HEK293 (cell line): ENCODE measurements at regions of chr12 and their contacts with region 1.

Region 1: DNA sequence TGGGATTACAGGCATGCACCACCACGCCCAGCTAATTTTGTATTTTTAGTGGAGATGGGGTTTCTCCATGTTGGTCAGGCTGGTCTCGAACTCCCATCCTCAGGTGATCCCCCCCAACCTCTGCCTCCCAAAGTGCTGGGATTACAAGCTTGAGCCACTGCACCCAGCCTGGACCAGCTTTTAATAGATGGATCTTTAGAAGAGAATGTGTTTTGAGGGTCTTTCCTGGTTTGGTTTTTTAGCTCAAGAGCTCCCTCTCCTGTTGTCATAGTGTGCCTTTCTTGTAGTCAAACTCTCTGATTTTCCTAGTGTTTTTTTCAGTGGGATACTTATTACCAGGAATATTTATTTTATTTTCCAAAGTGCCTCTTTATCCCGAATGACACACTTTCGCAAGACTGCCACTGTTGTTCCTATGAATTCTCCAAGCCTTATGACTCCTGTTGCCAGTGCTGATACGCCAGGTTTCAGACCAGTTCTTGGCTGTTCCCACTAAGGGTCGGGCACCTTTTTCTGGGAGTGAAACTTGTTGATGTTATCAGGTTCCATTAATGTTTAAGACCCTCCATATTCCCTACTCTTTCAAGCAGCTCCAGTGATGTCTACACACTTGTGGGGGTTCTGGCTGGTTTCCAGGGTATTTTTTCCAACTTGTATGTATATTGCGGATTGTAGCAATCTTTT is 31.5 kb upstream of the LIMA1 start:
- H3K4me3 ChIP-seq: no peak overlapping the region
- H3K27ac ChIP-seq: no peak overlapping the region
- H3K4me1 ChIP-seq: no peaks in the 10 kb centered on the region
- CTCF ChIP-seq: peak; percentile 48; the same call in 1 of the 2 replicates

Region 2: DNA sequence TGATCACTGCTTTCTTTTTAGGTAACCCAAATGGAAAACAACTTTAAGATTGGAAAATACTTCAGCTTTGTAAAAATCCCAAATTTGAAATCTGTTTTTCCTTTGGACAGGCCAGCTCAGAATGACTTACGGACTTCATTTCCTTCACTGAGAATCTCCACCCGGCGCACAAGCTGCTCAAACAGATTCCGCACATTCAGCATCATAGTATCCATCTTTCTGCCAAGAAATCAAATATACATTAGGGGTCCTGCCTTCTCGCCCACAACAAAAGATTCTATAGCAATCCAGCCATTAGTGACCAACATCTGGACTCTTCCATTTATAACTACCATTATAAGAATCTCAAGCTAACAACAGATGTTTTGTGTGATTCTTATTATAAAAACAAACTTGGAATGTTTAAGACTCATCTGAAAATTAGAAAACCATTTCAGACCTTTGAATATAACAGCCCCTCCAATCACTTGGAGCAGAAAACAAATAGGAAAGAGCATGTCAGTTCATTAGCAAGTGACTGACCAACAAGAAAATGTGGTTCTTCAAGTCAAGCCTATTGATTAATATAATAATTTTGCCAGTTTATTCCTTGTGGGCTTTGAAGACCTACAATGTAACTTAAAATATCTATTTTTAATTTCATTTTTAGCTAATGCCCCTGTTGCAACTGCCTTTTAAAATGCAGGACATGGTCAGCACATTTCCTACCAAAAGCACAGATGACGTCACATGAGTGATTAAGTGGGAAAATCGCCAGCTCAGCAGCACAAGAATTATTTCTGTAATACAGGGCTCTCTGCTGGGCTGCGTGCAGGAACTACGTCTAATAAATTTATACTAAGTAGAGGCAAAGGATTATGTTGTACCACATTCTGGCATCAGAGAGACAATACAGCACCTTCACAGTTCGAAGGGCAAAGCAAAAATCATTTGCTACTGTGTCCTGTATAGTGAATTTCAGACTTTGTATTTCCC is 298.0 kb before region 1 on chr12:
- CTCF ChIA-PET with region 1: no interaction called
- POLR2A ChIA-PET with region 1: no interaction called
- H3K4me3 ChIP-seq: no peak overlapping the region
- H3K27ac ChIP-seq: peak overlapping the region; percentile 13; the same call in 1 of the 2 replicates
- H3K4me1 ChIP-seq: peaks cover 12% of the 10 kb centered on the region
- CTCF ChIP-seq: no peak

Region 3: GRCh38 chr12:50111693-50112455 is 202.9 kb before region 1 on chr12 and contains the start of gene COX14:
- CTCF ChIA-PET with region 1: interaction called, 22 read pairs
- POLR2A ChIA-PET with region 1: interaction called, 3 read pairs
- H3K4me3 ChIP-seq: peak within 1 kb of the TSS; percentile 75
- H3K27ac ChIP-seq: peak within 1 kb of the TSS; percentile 65
- H3K4me1 ChIP-seq: peaks cover 6% of the 10 kb centered on the region; the same call in 1 of the 2 replicates
- CTCF ChIP-seq: peak; percentile 96; the same call in 1 of the 2 replicates

Region 4: DNA sequence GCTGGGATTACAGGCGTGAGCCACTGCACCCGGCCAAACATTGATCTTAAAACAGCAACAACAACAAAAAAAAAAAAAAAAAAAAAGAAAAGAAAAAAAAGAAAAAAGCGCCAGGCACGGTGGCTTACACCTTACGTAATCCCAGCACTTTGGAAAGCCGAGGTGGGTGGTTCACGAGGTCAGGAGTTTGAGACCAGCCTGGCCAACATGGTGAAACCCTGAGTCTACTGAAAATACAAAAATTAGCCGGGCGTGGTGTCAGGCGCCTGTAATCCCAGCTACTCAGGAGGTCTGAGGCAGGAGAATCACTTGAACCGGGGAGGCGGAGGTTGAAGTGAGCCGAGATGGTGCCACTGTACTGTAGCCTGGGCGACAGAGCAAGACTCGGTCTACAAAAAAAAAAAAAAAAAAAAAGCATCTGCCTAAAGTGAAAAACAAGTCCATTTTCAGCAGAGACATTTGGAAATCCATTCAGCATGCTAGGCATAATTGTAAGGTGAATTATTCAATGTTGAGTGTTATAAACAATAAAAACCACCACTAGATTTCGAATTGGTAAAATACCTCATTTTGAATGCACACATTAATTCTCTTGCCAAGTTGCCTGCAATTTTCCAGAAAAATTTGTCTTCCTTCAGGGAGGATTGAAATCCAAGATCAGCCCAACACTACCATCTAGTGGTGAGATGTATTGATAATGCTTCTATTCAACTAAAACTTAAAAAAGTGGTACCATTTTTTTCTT is 139.6 kb before region 1 on chr12:
- CTCF ChIA-PET with region 1: interaction called, 41 read pairs
- POLR2A ChIA-PET with region 1: no interaction called
- H3K4me3 ChIP-seq: no peak overlapping the region
- H3K27ac ChIP-seq: no peak overlapping the region
- H3K4me1 ChIP-seq: no peaks in the 10 kb centered on the region
- CTCF ChIP-seq: peak; percentile 31; the same call in 1 of the 2 replicates

Region 5: DNA sequence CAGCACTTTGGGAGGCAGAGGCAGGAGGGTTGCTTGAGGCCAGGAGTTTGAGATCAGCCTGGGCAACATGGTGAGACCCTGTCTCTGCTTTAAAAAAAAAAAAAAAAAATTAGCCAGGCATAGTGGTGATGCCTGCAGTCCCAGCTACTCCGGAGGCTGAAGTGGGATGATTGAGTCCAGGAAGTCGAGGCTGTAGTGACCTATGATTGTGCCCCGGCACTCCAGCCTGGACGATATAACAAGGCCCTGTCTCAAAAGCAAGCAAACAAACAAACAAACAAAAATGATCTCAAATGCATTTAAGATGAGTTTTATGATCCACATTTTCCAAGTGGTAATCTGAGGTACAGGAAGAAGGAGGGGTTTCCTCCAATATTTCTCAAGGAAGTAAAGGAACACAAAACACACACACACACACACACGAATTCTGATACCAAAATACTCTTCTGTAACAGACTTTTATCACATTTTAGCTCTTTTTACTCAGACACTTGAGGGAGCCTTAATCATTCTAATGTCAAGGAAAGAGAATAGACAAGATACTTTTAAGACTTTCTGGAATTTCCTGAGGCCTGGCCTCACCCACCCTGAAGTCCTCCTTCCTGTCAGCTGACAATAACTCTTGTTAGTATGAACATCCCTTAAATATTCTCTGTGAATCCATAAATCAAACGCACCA is 103.2 kb before region 1 on chr12:
- CTCF ChIA-PET with region 1: interaction called, 12 read pairs
- POLR2A ChIA-PET with region 1: interaction called, 3 read pairs
- H3K4me3 ChIP-seq: no peak overlapping the region
- H3K27ac ChIP-seq: no peak overlapping the region; the same call in 1 of the 2 replicates
- H3K4me1 ChIP-seq: 0 out of 2 replicates have a peak, but pooled peaks cover 2% of the 10 kb centered on the region
- CTCF ChIP-seq: no peak

Region 6: GRCh38 chr12:50302686-50303085 is 12.1 kb before region 1 on chr12:
- CTCF ChIA-PET with region 1: interaction called, 12 read pairs
- POLR2A ChIA-PET with region 1: interaction called, 3 read pairs
- H3K4me3 ChIP-seq: no peak overlapping the region
- H3K27ac ChIP-seq: no peak overlapping the region
- H3K4me1 ChIP-seq: no peaks in the 10 kb centered on the region
- CTCF ChIP-seq: no peak